WTC11 (cell line): ENCODE measurements at regions of chr3 and their contacts with region 1.

Region 1: GRCh38 chr3:136351905-136352304 is 101.8 kb downstream of the PCCB start:
- DNase-seq: no peak
- ATAC-seq: no peak
- H3K4me3 Mint-ChIP-seq: no peak overlapping the region
- H3K27ac Mint-ChIP-seq: no peak overlapping the region
- H3K4me1 Mint-ChIP-seq: peaks cover 13% of the 10 kb centered on the region
- H3K27me3 Mint-ChIP-seq: no peaks in the 10 kb centered on the region
- CTCF ChIP-seq: no peak

Region 2: GRCh38 chr3:136390574-136390973 is 38.7 kb after region 1 on chr3:
- CTCF ChIA-PET with region 1: interaction called, 14 read pairs
- POLR2A ChIA-PET with region 1: no interaction called
- DNase-seq: no peak
- ATAC-seq: no peak
- H3K4me3 Mint-ChIP-seq: no peak overlapping the region
- H3K27ac Mint-ChIP-seq: no peak overlapping the region
- H3K4me1 Mint-ChIP-seq: no peaks in the 10 kb centered on the region
- H3K27me3 Mint-ChIP-seq: no peaks in the 10 kb centered on the region
- CTCF ChIP-seq: no peak